Activated CD4-positive, alpha-beta memory T cell treated with anti-CD3 and anti-CD28 coated beads for 36 hours (primary cell): ENCODE measurements at regions of chr15 and their contacts with region 1.

Region 1: GRCh38 chr15:75367913-75368688 is at the start of gene MAN2C1:
- DNase-seq: peak; percentile 96
- H3K4me3 Mint-ChIP-seq: peak within 1 kb of the TSS; percentile 90
- H3K27ac Mint-ChIP-seq: peak within 1 kb of the TSS; percentile 93
- H3K4me1 Mint-ChIP-seq: peaks cover 23% of the 10 kb centered on the region
- H3K27me3 Mint-ChIP-seq: no peaks in the 10 kb centered on the region
- total RNA-seq, gene MAN2C1: 177 to 192 TPM

Region 2: DNA sequence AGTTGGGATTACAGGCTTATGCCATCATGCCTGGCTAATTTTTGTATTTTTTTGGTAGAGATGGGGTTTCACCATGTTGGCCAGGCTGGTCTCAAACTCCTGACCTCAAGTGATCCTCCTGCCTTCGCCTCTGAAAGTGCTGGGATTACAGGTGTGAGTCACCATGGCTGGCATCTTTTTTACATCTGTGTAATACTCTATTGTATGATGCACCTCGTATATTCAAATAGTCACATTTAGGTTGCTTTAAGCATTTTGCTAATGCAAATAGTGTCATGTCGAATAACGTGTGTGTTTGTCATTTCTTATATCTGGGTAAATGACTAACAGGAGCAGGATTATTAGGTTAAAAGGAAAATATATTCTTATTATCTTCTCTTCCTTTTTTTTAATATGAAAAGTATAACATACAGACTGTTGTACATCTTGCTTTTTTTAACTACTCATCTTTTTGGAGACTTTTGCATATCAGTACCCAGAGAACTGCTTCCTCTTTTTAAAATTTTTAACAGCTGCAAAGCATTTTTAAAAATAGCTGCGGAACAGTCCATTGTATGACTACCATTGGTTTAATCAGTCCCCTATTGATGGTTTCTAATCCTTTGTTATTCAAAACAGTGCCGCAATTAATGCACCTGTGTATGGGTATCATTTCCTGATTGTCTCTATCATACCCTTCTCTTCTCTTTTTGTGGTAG is 359.3 kb before region 1 on chr15:
- CTCF ChIA-PET with region 1: no interaction called
- POLR2A ChIA-PET with region 1: no interaction called
- intact Hi-C with region 1: no loop called
- DNase-seq: no peak
- H3K4me3 Mint-ChIP-seq: no peak overlapping the region
- H3K27ac Mint-ChIP-seq: no peak overlapping the region
- H3K4me1 Mint-ChIP-seq: peaks cover 2% of the 10 kb centered on the region
- H3K27me3 Mint-ChIP-seq: peaks cover 5% of the 10 kb centered on the region

Region 3: GRCh38 chr15:75249726-75250125 is 118.4 kb before region 1 on chr15:
- CTCF ChIA-PET with region 1: no interaction called
- POLR2A ChIA-PET with region 1: no interaction called
- intact Hi-C with region 1: no loop called
- DNase-seq: peak; percentile 0
- H3K4me3 Mint-ChIP-seq: no peak overlapping the region
- H3K27ac Mint-ChIP-seq: no peak overlapping the region
- H3K4me1 Mint-ChIP-seq: no peaks in the 10 kb centered on the region
- H3K27me3 Mint-ChIP-seq: peaks cover 9% of the 10 kb centered on the region

Region 4: GRCh38 chr15:75335705-75336355 is 32.3 kb before region 1 on chr15 and contains the start of gene COMMD4:
- CTCF ChIA-PET with region 1: interaction called, 14 read pairs
- POLR2A ChIA-PET with region 1: interaction called, 5 read pairs
- intact Hi-C with region 1: no loop called
- DNase-seq: peak; percentile 93
- H3K4me3 Mint-ChIP-seq: peak within 1 kb of the TSS; percentile 97
- H3K27ac Mint-ChIP-seq: peak within 1 kb of the TSS; percentile 84
- H3K4me1 Mint-ChIP-seq: peaks cover 19% of the 10 kb centered on the region
- H3K27me3 Mint-ChIP-seq: peaks cover 2% of the 10 kb centered on the region
- total RNA-seq, gene COMMD4: 83.3 to 87.8 TPM

Region 5: DNA sequence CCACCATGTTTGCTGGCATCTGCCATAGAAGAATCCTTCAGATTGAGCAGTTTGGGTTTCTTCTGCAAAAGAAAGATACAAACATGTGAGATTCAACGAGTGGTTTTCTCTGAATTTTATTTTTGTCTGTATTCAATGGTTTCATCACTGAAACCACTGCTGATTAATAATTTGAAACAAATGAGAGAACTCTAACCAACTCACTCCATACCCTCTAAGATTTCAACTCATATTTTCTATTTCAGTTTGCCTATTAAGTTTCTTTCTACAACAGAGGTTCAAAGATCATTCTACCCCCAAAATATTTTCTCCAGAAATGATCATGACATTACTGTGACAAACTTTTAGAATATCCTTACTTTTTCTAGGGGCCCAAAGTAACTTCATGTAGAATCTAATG is 39.0 kb after region 1 on chr15:
- CTCF ChIA-PET with region 1: interaction called, 14 read pairs
- POLR2A ChIA-PET with region 1: interaction called, 3 read pairs
- intact Hi-C with region 1: no loop called
- DNase-seq: no peak
- H3K4me3 Mint-ChIP-seq: no peak overlapping the region
- H3K27ac Mint-ChIP-seq: peak overlapping the region; percentile 65
- H3K4me1 Mint-ChIP-seq: peaks cover 55% of the 10 kb centered on the region
- H3K27me3 Mint-ChIP-seq: no peaks in the 10 kb centered on the region

Region 6: DNA sequence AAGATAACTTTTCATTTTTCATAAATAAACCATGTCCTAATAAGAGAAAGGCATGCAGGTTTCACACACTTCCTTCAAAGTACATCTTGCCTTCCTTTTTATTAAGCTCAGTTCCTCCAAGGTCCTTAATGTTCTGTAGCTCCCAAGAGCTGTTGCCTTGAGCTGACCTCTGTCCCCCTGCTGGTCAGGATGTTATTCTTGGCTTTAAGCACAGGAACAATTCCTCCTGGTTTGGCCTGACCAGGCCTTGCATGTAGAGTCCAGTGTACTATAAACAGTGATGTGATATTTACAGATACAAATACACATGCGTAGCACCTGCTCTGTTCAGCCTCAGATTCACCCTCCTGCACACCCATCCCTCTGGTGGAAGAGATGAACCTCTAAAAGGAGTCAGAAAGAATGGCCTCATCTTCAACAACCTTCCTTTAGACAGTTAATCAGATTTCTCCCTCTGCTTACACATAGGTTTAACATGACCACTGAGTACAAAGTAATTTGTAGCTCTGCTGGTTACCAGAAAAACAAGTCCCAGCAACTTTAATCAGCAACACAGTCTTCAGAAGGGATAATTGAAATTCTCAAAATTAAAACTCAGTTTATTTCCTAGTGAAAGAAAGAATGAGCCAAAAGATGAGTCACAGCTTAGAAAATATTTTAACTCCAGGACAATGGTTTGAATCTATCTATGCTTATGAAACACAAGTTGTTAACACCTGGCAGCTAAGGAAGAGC is 164.5 kb after region 1 on chr15:
- CTCF ChIA-PET with region 1: interaction called, 11 read pairs
- POLR2A ChIA-PET with region 1: interaction called, 8 read pairs
- intact Hi-C with region 1: no loop called
- DNase-seq: no peak
- H3K4me3 Mint-ChIP-seq: no peak overlapping the region
- H3K27ac Mint-ChIP-seq: no peak overlapping the region
- H3K4me1 Mint-ChIP-seq: peaks cover 20% of the 10 kb centered on the region
- H3K27me3 Mint-ChIP-seq: no peaks in the 10 kb centered on the region

Region 7: GRCh38 chr15:75625542-75626347 is 257.6 kb after region 1 on chr15 and contains the start of gene SNUPN:
- CTCF ChIA-PET with region 1: interaction called, 19 read pairs
- POLR2A ChIA-PET with region 1: interaction called, 11 read pairs
- intact Hi-C with region 1: loop called (anchors 2 kb)
- DNase-seq: peak; percentile 97
- H3K4me3 Mint-ChIP-seq: peak within 1 kb of the TSS; percentile 98
- H3K27ac Mint-ChIP-seq: peak within 1 kb of the TSS; percentile 98
- H3K4me1 Mint-ChIP-seq: peaks cover 35% of the 10 kb centered on the region
- H3K27me3 Mint-ChIP-seq: no peaks in the 10 kb centered on the region
- total RNA-seq, gene SNUPN: 33.4 to 34.2 TPM

Region 8: DNA sequence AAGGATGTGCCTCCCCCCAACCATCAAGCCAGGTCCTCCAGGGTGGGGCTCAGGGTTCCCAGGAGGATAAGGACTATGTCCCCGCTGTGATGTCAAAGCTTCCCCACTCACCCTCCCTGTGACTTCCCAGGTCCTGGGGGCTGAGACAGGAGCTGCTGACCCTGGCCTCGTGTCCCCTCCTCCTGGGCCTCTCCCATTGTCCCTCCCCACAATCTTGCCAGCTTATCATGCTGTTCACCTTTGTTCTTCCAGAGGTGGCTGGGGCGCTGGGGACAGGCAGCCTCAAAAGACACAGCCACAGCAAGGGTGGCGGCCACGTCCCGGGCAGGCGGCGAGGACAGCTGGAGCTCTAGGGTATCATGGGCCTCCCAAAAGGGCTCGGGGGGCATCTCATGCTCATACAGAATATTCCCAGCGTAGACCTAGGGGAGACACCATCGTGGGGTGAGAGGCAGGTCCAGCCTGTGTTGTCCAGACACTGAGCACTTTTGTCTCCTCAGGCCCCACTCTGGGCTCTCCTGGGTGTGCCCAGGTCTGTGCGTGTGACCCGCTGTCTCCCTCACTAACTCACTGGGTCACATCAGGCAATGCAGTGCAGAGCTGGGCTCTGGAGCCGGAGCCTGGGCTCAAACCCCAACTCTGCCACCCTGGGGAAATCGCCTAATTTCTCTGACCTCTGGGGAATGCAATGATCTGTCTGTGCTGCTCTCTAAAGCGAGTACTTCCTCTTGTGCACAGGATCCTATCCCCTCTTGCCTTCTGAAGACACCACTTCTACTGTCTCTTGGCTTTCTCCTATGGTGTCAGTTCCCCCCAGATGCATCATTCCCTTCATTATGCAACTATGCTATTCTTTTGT is 309.6 kb after region 1 on chr15:
- CTCF ChIA-PET with region 1: interaction called, 45 read pairs
- POLR2A ChIA-PET with region 1: no interaction called
- intact Hi-C with region 1: loop called (anchors 2 kb)
- DNase-seq: no peak
- H3K4me3 Mint-ChIP-seq: no peak overlapping the region
- H3K27ac Mint-ChIP-seq: no peak overlapping the region
- H3K4me1 Mint-ChIP-seq: no peaks in the 10 kb centered on the region
- H3K27me3 Mint-ChIP-seq: no peaks in the 10 kb centered on the region